Activated CD4-positive, alpha-beta T cell treated with anti-CD3 and anti-CD28 coated beads, Interleukin-2, amount 10 ng/mL, durations not matched to agents 24 days and 14 days (primary cell): ENCODE measurements at regions of chr10 and their contacts with region 1.

Region 1: GRCh38 chr10:130127364-130128061 is 8.7 kb upstream of the GLRX3 start:
- DNase-seq: peak; percentile 87
- H3K4me3 Mint-ChIP-seq: no peak overlapping the region
- H3K27ac Mint-ChIP-seq: peak overlapping the region; percentile 7
- H3K4me1 Mint-ChIP-seq: peaks cover 8% of the 10 kb centered on the region
- H3K27me3 Mint-ChIP-seq: peaks cover 54% of the 10 kb centered on the region

Region 2: GRCh38 chr10:128211953-128212727 is 1915.4 kb before region 1 on chr10:
- intact Hi-C with region 1: loop called (anchors 5 kb)
- DNase-seq: peak; percentile 97
- H3K4me3 Mint-ChIP-seq: peak overlapping the region; percentile 81
- H3K27ac Mint-ChIP-seq: peak overlapping the region; percentile 84
- H3K4me1 Mint-ChIP-seq: peaks cover 9% of the 10 kb centered on the region
- H3K27me3 Mint-ChIP-seq: peaks cover 13% of the 10 kb centered on the region

Region 3: GRCh38 chr10:129030996-129031843 is 1096.3 kb before region 1 on chr10:
- intact Hi-C with region 1: loop called (anchors 1 kb)
- DNase-seq: peak; percentile 87
- H3K4me3 Mint-ChIP-seq: no peak overlapping the region
- H3K27ac Mint-ChIP-seq: no peak overlapping the region
- H3K4me1 Mint-ChIP-seq: peaks cover 24% of the 10 kb centered on the region
- H3K27me3 Mint-ChIP-seq: peaks cover 29% of the 10 kb centered on the region

Region 4: DNA sequence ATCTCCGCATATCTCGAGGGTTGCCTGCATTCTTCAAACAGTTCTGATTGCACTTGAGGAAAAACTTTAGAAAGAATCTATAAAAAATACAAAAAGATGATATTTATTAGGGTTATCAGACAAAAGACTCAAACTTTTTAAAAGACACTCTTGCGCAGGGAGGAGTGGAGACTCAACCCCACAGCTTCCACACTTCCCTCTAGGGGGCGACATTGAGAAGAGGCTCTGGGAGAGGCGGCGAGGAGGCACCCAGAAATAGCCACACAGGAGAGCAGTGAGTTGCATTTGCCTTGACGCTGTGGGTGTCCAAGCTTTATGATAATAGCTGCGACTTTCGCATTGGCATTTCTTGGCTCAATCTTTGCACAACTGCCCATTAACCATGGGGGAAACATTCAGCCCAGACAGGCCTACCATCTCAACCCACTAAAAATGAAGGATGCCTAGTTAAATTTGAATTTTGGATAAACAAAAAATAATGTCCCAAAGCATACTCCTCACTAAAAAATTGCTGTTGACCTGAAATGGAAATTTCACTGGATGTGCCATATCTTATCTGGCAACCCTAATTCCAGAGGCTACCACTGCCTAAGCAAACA is 249.6 kb before region 1 on chr10:
- intact Hi-C with region 1: loop called (anchors 2 kb)
- DNase-seq: peak; percentile 83
- H3K4me3 Mint-ChIP-seq: no peak overlapping the region
- H3K27ac Mint-ChIP-seq: no peak overlapping the region
- H3K4me1 Mint-ChIP-seq: no peaks in the 10 kb centered on the region
- H3K27me3 Mint-ChIP-seq: no peaks in the 10 kb centered on the region

Region 5: GRCh38 chr10:129971381-129972144 is 155.9 kb before region 1 on chr10:
- intact Hi-C with region 1: loop called (anchors 1 kb)
- DNase-seq: no peak
- H3K4me3 Mint-ChIP-seq: peak overlapping the region; percentile 45
- H3K27ac Mint-ChIP-seq: peak overlapping the region; percentile 75
- H3K4me1 Mint-ChIP-seq: peaks cover 8% of the 10 kb centered on the region
- H3K27me3 Mint-ChIP-seq: peaks cover 62% of the 10 kb centered on the region

Region 6: GRCh38 chr10:131418676-131419075 is 1291.2 kb after region 1 on chr10:
- intact Hi-C with region 1: no loop called
- DNase-seq: no peak
- H3K4me3 Mint-ChIP-seq: no peak overlapping the region
- H3K27ac Mint-ChIP-seq: no peak overlapping the region
- H3K4me1 Mint-ChIP-seq: no peaks in the 10 kb centered on the region
- H3K27me3 Mint-ChIP-seq: no peaks in the 10 kb centered on the region